GM13977 (cell line): ENCODE measurements at regions of chr17 and their contacts with region 1.

Region 1: DNA sequence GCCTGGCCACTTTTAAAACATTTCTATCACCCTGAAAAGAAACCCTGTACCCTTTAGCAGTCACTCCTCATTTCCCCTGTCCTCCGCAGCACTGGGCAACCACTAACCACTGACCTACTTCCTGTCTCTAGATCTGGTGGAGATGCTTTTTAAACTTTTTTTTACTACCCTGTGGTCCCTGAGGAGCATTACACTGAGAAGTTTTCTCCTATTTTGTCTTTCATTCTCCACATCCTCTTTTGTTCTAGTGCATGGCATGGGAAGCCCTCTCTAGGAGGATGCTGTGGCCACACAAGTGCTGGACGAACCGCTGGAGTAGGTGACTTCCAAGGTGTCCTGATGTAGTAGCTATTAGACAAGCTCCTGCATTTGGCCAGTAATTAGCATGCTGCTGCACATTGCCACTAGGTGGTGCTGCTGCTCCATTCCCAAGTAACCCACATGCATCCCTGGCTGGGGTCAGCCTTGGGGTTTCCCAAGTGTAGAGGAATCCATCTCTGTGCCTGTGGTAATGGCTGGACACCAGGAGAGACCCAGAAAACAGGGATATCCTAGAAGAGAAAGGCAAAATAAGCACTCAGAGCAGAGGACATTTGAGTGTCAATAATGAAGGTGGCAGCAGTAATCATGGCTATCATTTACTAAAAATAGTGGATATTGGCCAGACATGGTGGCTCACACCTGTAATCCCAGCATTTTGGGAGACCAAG is 143.8 kb upstream of the CRHR1 start:
- DNase-seq: peak; percentile 72
- CTCF ChIP-seq: peak; percentile 97

Region 2: DNA sequence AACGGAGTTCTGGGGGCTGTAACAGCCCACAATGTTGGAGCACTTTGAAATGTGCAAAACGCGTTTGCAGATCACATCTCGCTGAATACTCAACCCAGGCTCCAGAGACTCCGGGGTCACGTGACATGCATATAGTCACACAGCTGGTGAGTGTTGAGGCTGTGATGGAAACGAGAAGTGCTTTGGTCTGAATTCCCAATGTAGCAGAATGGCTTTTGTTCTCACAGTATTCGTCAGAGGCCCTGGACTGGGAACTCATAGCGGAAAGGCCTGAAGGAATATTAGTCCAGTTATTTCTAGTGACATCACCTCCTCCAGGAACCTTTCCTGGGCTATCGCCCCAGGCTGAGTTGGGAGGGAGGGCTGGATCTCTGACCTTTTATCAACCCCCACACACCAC is 48.1 kb after region 1 on chr17:
- in situ Hi-C with region 1: no loop called
- DNase-seq: no peak
- CTCF ChIP-seq: no peak

Region 3: GRCh38 chr17:45828628-45829027 is 188.3 kb after region 1 on chr17:
- in situ Hi-C with region 1: loop called (anchors 10 kb)
- DNase-seq: no peak
- CTCF ChIP-seq: no peak